HEK293 (cell line): ENCODE measurements at regions of chr17 and their contacts with region 1.

Region 1: GRCh38 chr17:27601069-27601975 is 29.7 kb upstream of the LGALS9 start:
- H3K4me3 ChIP-seq: no peak overlapping the region
- H3K27ac ChIP-seq: no peak overlapping the region
- H3K4me1 ChIP-seq: no peaks in the 10 kb centered on the region
- CTCF ChIP-seq: peak; percentile 62

Region 2: GRCh38 chr17:27345141-27345904 is 256.0 kb before region 1 on chr17:
- CTCF ChIA-PET with region 1: interaction called, 115 read pairs
- POLR2A ChIA-PET with region 1: no interaction called
- H3K4me3 ChIP-seq: no peak overlapping the region
- H3K27ac ChIP-seq: no peak overlapping the region
- H3K4me1 ChIP-seq: no peaks in the 10 kb centered on the region; the same call in 1 of the 2 replicates
- CTCF ChIP-seq: no peak

Region 3: DNA sequence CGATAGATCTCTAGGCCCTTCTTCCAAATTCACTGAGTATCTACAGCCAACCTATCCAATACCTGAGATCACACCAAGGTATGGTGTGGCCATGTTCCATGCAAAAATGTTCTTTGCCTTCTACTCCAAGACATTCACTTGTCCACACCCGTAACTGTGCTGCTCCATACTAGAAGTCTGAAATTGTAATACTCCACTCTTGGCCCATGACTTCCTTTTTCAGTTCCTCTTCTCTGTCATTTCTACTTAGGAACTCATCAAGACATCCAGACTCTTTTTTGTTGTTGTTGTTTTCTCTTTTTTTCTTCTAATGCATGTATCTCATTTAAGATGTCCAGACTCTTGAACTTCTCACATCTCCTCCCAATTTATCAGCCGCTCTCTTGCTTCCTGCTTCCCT is 187.5 kb before region 1 on chr17:
- CTCF ChIA-PET with region 1: interaction called, 16 read pairs
- POLR2A ChIA-PET with region 1: no interaction called
- H3K4me3 ChIP-seq: no peak overlapping the region
- H3K27ac ChIP-seq: no peak overlapping the region
- H3K4me1 ChIP-seq: no peaks in the 10 kb centered on the region
- CTCF ChIP-seq: no peak

Region 4: GRCh38 chr17:27512511-27513346 is 88.6 kb before region 1 on chr17:
- CTCF ChIA-PET with region 1: interaction called, 10 read pairs
- POLR2A ChIA-PET with region 1: no interaction called
- H3K4me3 ChIP-seq: no peak overlapping the region
- H3K27ac ChIP-seq: no peak overlapping the region
- H3K4me1 ChIP-seq: peaks cover 4% of the 10 kb centered on the region; the same call in 1 of the 2 replicates
- CTCF ChIP-seq: no peak

Region 5: DNA sequence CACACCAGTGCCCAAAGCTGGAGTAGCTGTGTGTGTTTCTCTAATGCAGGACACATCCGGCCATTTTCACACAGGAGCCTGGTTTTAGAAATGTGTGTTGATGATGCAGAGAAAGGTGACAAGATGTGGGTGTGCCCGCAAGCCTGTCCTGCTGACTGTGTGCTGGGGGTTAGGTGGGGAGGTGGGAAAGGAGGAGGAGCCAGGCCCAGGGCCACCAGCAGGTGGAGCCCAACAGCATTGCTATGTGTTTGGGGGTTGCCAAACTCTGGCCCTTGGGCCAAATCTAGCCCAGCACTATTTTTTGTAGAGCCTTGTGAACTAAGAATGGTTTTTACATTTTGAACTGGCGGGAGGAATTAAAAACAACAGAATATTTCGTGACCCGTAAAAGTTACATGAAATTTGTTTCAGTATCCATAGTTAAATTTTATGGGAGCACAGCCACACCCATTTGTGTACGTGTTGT is 32.0 kb before region 1 on chr17:
- CTCF ChIA-PET with region 1: interaction called, 73 read pairs
- POLR2A ChIA-PET with region 1: no interaction called
- H3K4me3 ChIP-seq: no peak overlapping the region
- H3K27ac ChIP-seq: no peak overlapping the region
- H3K4me1 ChIP-seq: peaks cover 9% of the 10 kb centered on the region
- CTCF ChIP-seq: peak; percentile 68

Region 6: DNA sequence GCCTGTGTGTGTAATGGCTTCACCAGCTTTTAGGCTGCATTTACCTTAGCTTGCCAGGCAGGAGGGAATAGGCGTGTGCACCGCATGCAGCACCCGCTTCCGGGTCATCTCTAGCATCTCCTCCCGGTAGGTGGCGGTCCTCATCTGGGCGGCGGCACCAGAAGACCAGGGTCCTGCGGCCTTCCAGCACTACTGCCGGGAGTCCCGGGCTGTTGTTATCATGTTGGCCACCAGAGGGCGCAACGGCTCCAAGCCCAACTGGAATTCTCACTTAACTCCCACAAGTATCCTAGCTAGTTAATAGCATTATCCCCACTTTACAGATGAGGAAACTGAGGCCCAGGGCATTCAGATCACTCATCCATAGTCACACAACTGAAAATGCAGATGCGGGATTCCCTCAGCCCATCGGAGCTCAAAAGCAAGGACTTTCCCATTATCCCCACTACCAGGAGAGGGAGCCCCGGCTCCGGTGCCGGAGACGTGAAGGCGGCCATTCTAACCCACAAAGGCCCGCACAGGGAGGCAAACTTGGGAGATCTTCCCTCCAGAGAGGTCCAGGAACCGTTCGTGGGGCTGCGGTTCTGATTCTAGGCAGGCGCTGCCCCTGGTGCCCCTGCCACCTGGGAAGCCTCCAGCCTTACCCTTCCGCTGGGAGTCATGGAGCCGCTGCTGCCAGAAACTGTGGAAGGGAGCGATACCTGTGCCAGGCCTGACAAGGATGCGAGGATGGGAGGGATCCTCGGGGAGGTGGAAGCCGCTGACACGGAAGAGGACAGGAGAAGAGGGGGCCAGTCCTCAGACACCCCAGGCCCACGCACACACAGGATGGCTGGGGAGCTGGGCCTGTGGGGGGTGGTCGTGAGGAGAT is 53.6 kb after region 1 on chr17:
- CTCF ChIA-PET with region 1: interaction called, 267 read pairs
- POLR2A ChIA-PET with region 1: no interaction called
- H3K4me3 ChIP-seq: no peak overlapping the region
- H3K27ac ChIP-seq: no peak overlapping the region
- H3K4me1 ChIP-seq: no peaks in the 10 kb centered on the region
- CTCF ChIP-seq: peak; percentile 96